WTC11 (cell line): ENCODE measurements at regions of chr17 and their contacts with region 1.

Region 1: DNA sequence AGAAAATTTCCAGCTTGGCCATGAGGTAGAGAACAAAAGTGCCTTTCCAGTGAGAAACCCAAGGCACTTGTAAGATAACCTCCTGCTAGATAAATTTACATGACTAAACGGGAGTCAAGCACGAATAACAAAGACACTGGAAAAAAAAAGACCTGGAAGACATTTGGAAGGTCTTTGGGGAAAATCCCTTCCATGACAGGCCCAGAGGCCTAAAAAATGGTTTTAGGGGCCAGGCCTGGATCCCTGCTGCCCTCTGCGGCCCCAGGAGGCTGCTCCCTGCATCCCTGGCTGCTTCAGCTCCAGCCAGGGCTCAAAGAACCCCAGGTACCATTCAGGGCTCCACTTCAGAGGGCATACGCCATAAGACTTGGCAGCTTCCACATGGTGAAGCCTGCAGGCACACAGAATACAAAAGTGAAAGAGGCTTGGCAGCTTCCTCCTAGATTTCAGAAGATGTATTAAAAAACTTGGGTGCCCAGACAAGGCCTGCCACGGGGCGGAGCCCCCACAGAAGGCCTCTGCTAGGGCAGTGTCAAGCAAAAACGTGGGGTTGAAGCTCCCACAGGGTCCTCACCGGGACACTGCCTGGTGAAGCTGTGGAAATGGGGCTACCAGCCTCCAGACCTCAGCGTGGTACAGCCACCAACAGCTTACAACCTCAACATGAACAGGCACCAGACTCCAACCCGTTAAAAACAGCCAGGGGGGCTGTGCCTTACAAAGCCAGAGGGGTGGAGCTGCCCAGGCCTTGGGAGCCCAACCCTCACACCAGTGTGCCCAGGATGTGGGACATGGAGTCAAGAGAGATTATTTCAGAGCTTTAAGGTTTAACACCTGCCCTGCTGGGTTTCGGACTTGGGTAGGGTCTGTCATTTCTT is 77.1 kb downstream of the SDK2 start:
- DNase-seq: no peak
- ATAC-seq: peak; percentile 79
- H3K4me3 Mint-ChIP-seq: peak overlapping the region; percentile 25; the same call in 1 of the 2 replicates
- H3K27ac Mint-ChIP-seq: peak overlapping the region; percentile 95
- H3K4me1 Mint-ChIP-seq: peaks cover 79% of the 10 kb centered on the region
- H3K27me3 Mint-ChIP-seq: no peaks in the 10 kb centered on the region
- CTCF ChIP-seq: no peak

Region 2: DNA sequence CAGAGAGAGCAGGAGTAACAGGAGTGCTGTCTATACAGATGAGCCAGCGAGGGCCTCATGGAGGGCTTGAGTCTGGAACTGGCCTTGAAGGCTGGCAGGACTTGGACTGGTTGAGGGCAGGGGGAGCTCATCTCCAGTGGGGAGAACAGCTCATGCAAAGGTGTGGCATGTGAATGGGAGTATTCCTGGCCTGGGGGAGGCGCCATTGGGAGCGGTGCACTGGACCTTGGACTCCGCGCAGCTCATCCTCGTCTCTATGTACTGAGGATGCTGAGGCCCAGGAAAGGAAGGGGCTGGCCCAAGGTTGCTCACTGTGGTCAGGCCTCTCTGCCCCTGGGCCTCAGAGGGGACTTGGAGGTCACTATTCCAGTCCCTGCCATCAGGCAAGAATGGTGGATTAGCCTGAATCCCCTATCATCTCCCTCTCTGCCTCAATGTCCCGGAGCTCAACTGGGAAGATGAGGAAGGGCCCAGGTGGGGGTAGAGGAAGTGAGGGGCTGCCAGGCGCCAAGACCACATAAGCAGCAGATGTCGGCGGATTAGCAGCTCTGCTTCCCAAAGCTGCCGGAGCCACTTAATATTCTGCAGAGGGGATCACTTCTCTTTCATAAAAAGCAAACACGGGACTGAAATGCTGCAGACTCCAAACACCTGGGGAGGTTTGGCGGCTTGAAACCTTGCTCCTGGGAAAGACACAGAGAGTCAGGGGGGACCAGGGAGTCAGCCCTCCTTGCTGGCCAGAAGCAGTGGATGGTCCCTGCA is 11.8 kb before region 1 on chr17:
- CTCF ChIA-PET with region 1: interaction called, 12 read pairs
- POLR2A ChIA-PET with region 1: interaction called, 4 read pairs
- DNase-seq: no peak
- ATAC-seq: no peak
- H3K4me3 Mint-ChIP-seq: no peak overlapping the region
- H3K27ac Mint-ChIP-seq: no peak overlapping the region; the same call in 1 of the 2 replicates
- H3K4me1 Mint-ChIP-seq: peaks cover 39% of the 10 kb centered on the region
- H3K27me3 Mint-ChIP-seq: no peaks in the 10 kb centered on the region
- CTCF ChIP-seq: no peak

Region 3: GRCh38 chr17:73613271-73614233 is 46.4 kb after region 1 on chr17:
- CTCF ChIA-PET with region 1: no interaction called
- POLR2A ChIA-PET with region 1: no interaction called
- DNase-seq: peak; percentile 72
- ATAC-seq: peak; percentile 70
- H3K4me3 Mint-ChIP-seq: peak overlapping the region; percentile 52
- H3K27ac Mint-ChIP-seq: peak overlapping the region; percentile 96
- H3K4me1 Mint-ChIP-seq: peaks cover 57% of the 10 kb centered on the region
- H3K27me3 Mint-ChIP-seq: no peaks in the 10 kb centered on the region
- CTCF ChIP-seq: no peak

Region 4: GRCh38 chr17:73710095-73710592 is 143.0 kb after region 1 on chr17:
- CTCF ChIA-PET with region 1: no interaction called
- POLR2A ChIA-PET with region 1: no interaction called
- DNase-seq: peak; percentile 87
- ATAC-seq: peak; percentile 82
- H3K4me3 Mint-ChIP-seq: no peak overlapping the region
- H3K27ac Mint-ChIP-seq: 0 out of 2 replicates have a peak overlapping the region, but pooled peaks have one; percentile 29
- H3K4me1 Mint-ChIP-seq: peaks cover 13% of the 10 kb centered on the region
- H3K27me3 Mint-ChIP-seq: peaks cover 12% of the 10 kb centered on the region; the same call in 1 of the 2 replicates
- CTCF ChIP-seq: peak; percentile 90